ENCODE measurements at regions of chr3 and their contacts with region 1.

Region 1: GRCh38 chr3:25582242-25582641 is 82.5 kb downstream of the TOP2B start:
- DNase-seq: peak in 2 of 3 donors; percentile 20 to 72
- H3K4me3 ChIP-seq: no peak overlapping the region
- H3K4me3 Mint-ChIP-seq: no peak overlapping the region
- H3K27ac ChIP-seq: no peak overlapping the region
- H3K27ac Mint-ChIP-seq: peak overlapping the region in 3 of 7 donors; percentile 18 to 67 (median 45)
- H3K4me1 ChIP-seq: no peaks in the 10 kb centered on the region
- H3K4me1 Mint-ChIP-seq: peaks cover 8% of the 10 kb centered on the region
- H3K27me3 ChIP-seq: no peaks in the 10 kb centered on the region
- H3K27me3 Mint-ChIP-seq: peaks cover 5 to 8% (median 6%) of the 10 kb centered on the region in 3 donors
- CTCF ChIP-seq: no peak

Region 2: DNA sequence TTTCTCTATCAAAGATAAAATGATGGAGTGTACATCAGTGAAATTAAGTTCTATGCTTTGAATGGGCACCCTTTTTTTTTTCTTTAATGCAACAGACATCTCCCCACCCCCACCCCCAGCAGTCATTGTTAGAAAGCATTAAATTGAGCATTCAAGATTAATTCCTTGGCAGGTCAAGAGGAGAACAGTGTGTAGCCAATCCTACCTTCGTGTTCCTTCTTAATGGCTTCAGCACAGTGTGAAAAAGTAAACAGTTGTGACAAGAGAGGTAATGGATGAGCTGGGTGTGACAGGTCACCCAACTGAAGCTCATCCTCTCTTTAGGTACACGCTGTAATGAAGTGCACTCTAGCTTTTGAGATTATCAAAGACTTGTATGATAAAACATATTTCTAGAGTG is 352.7 kb before region 1 on chr3:
- intact Hi-C with region 1: no loop called
- DNase-seq: no peak
- H3K4me3 ChIP-seq: no peak overlapping the region
- H3K4me3 Mint-ChIP-seq: no peak overlapping the region
- H3K27ac ChIP-seq: no peak overlapping the region
- H3K27ac Mint-ChIP-seq: no peak overlapping the region
- H3K4me1 ChIP-seq: no peaks in the 10 kb centered on the region
- H3K4me1 Mint-ChIP-seq: no peaks in the 10 kb centered on the region
- H3K27me3 ChIP-seq: no peaks in the 10 kb centered on the region
- H3K27me3 Mint-ChIP-seq: peaks cover 0 to 1% (median 0%) of the 10 kb centered on the region in 3 donors
- CTCF ChIP-seq: no peak

Region 3: GRCh38 chr3:25448750-25449692 is 133.2 kb before region 1 on chr3:
- intact Hi-C with region 1: loop called in 1 of 2 experiments (anchors 10 kb)
- DNase-seq: no peak
- H3K4me3 ChIP-seq: no peak overlapping the region
- H3K4me3 Mint-ChIP-seq: no peak overlapping the region
- H3K27ac ChIP-seq: no peak overlapping the region
- H3K27ac Mint-ChIP-seq: no peak overlapping the region
- H3K4me1 ChIP-seq: no peaks in the 10 kb centered on the region
- H3K4me1 Mint-ChIP-seq: no peaks in the 10 kb centered on the region
- H3K27me3 ChIP-seq: no peaks in the 10 kb centered on the region
- H3K27me3 Mint-ChIP-seq: peaks cover 1 to 5% (median 2%) of the 10 kb centered on the region in 3 donors
- CTCF ChIP-seq: no peak

Region 4: GRCh38 chr3:25618028-25618427 is 35.8 kb after region 1 on chr3:
- intact Hi-C with region 1: no loop called
- DNase-seq: no peak
- H3K4me3 ChIP-seq: no peak overlapping the region
- H3K4me3 Mint-ChIP-seq: no peak overlapping the region
- H3K27ac ChIP-seq: no peak overlapping the region
- H3K27ac Mint-ChIP-seq: no peak overlapping the region
- H3K4me1 ChIP-seq: no peaks in the 10 kb centered on the region
- H3K4me1 Mint-ChIP-seq: no peaks in the 10 kb centered on the region
- H3K27me3 ChIP-seq: no peaks in the 10 kb centered on the region
- H3K27me3 Mint-ChIP-seq: no peaks in the 10 kb centered on the region
- CTCF ChIP-seq: no peak

Region 5: DNA sequence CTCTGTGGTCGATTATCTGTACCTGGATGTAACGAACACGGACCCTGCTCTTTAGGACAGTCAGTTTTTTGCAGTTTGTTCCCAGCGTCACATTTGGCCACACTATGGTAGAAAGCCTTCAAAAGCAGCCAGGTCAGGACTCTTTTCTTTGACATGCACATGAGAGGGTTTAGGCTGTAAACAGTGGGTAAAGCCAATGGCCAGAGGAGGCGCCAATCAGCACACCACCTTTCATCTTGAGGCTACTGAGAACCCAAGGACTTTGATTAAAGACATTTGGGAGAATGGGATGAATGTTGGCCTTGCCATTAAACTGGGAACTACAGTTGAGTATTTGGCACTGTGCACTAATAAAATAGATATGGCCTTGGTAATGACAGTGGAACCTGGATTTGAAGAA is 433.5 kb after region 1 on chr3:
- intact Hi-C with region 1: no loop called
- DNase-seq: no peak
- H3K4me3 ChIP-seq: no peak overlapping the region
- H3K4me3 Mint-ChIP-seq: no peak overlapping the region
- H3K27ac ChIP-seq: no peak overlapping the region
- H3K27ac Mint-ChIP-seq: no peak overlapping the region
- H3K4me1 ChIP-seq: no peaks in the 10 kb centered on the region
- H3K4me1 Mint-ChIP-seq: no peaks in the 10 kb centered on the region
- H3K27me3 ChIP-seq: no peaks in the 10 kb centered on the region
- H3K27me3 Mint-ChIP-seq: no peaks in the 10 kb centered on the region
- CTCF ChIP-seq: no peak